MCF 10A (cell line): ENCODE measurements at regions of chr13 and their contacts with region 1.

Region 1: GRCh38 chr13:64154514-64154913 is 2738.9 kb upstream of the PCDH20 start:
- DNase-seq: peak; percentile 28
- H3K4me3 Mint-ChIP-seq: no peak overlapping the region
- H3K27ac Mint-ChIP-seq: no peak overlapping the region
- H3K4me1 Mint-ChIP-seq: peaks cover 5% of the 10 kb centered on the region
- H3K27me3 Mint-ChIP-seq: no peaks in the 10 kb centered on the region
- CTCF ChIP-seq: peak; percentile 28

Region 2: GRCh38 chr13:64165826-64166225 is 11.3 kb after region 1 on chr13:
- CTCF ChIA-PET with region 1: no interaction called
- POLR2A ChIA-PET with region 1: no interaction called
- intact Hi-C with region 1: no loop called
- DNase-seq: no peak
- H3K4me3 Mint-ChIP-seq: no peak overlapping the region
- H3K27ac Mint-ChIP-seq: no peak overlapping the region
- H3K4me1 Mint-ChIP-seq: no peaks in the 10 kb centered on the region
- H3K27me3 Mint-ChIP-seq: no peaks in the 10 kb centered on the region
- CTCF ChIP-seq: no peak

Region 3: DNA sequence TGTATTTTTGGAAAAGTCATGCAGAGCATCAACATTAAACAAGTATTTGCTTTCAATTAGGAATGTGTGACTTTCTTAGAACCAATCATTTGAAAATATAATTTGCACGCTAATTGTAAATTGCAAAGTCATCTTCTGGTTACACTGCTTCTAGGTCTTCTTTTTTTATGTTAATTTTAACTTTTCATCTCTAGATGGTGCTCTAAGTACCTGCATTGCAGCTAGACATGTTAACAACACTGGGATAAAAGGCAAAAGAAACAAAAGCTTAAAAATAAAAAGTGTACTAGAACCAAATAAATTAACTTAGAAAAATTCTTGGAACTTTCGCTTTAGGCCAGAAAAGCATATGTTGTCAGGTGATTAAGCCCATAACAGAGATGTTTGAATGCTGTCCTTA is 317.4 kb after region 1 on chr13:
- CTCF ChIA-PET with region 1: no interaction called
- POLR2A ChIA-PET with region 1: no interaction called
- intact Hi-C with region 1: loop called (anchors 10 kb)
- DNase-seq: peak; percentile 43
- H3K4me3 Mint-ChIP-seq: no peak overlapping the region
- H3K27ac Mint-ChIP-seq: no peak overlapping the region
- H3K4me1 Mint-ChIP-seq: no peaks in the 10 kb centered on the region
- H3K27me3 Mint-ChIP-seq: no peaks in the 10 kb centered on the region
- CTCF ChIP-seq: peak; percentile 55